ENCODE measurements at regions of chr1 and their contacts with region 1.

Region 1: DNA sequence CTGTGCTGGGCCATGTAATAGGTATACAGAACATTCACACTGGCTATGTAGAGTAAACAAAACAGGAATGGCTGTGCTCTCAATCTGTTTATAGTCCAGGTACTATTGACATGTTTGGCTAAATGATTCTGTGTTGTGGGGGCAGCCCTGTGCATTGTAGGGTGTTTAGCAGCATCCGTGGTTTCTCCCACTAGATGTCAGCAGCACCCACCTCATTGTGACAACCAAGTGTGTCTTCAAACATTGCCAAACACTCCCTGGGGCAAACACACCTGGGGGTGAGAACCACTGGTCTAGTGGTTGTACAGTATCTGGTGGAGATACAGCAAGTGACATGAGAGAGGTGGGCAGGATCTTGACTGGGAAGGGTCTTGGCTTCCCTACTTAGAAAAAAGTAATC is 80.4 kb upstream of the SPATA6 start:
- DNase-seq: peak; percentile 32
- ATAC-seq: no peak
- H3K4me3 Mint-ChIP-seq: no peak overlapping the region
- H3K27ac Mint-ChIP-seq: no peak overlapping the region
- H3K4me1 Mint-ChIP-seq: no peaks in the 10 kb centered on the region
- H3K27me3 Mint-ChIP-seq: no peaks in the 10 kb centered on the region

Region 2: DNA sequence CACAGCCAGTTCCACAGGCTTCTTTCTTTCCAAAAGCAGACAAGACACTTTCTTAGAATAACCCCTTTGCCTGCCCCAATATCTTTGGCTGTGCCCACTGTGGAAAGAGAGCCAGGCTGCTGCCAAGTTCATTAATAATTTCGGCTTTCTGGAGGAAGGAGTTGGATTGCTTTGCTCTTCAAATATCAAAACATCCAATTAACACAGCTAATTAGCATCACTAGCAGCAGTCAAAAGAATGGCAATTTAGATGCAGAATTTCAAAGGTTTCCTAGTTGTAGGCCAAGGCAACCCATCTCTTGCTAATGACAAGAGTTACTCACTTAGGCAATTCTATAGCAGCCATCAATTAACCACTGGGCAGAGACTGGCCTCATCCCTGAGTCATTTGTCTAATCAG is 10.6 kb after region 1 on chr1:
- CTCF ChIA-PET with region 1: no interaction called
- POLR2A ChIA-PET with region 1: no interaction called
- intact Hi-C with region 1: loop called in 1 of 2 experiments (anchors 1 kb)
- DNase-seq: no peak
- ATAC-seq: no peak
- H3K4me3 Mint-ChIP-seq: no peak overlapping the region
- H3K27ac Mint-ChIP-seq: no peak overlapping the region
- H3K4me1 Mint-ChIP-seq: no peaks in the 10 kb centered on the region
- H3K27me3 Mint-ChIP-seq: peaks cover 16% of the 10 kb centered on the region

Region 3: GRCh38 chr1:48697066-48697707 is 144.8 kb after region 1 on chr1:
- CTCF ChIA-PET with region 1: no interaction called
- POLR2A ChIA-PET with region 1: no interaction called
- intact Hi-C with region 1: loop called (anchors 5 to 10 kb)
- DNase-seq: peak; percentile 76
- ATAC-seq: no peak
- H3K4me3 Mint-ChIP-seq: no peak overlapping the region
- H3K27ac Mint-ChIP-seq: no peak overlapping the region
- H3K4me1 Mint-ChIP-seq: no peaks in the 10 kb centered on the region
- H3K27me3 Mint-ChIP-seq: peaks cover 7% of the 10 kb centered on the region

Measured in activated CD4-positive, alpha-beta T cell treated with anti-CD3 and anti-CD28 coated beads for 36 hours (primary cell).